Uterus (tissue), 4 donors: ENCODE measurements at regions of chr12 and their contacts with region 1.

Region 1: GRCh38 chr12:15209782-15210181 is 11.4 kb downstream of the RERG start:
- DNase-seq: peak in 1 of 2 donors; percentile 66
- H3K4me3 ChIP-seq: no peak overlapping the region
- H3K27ac ChIP-seq: peak overlapping the region; percentile 83 to 95
- H3K4me1 ChIP-seq: peaks cover 17 to 18% of the 10 kb centered on the region in 2 donors
- H3K27me3 ChIP-seq: no peaks in the 10 kb centered on the region
- CTCF ChIP-seq: no peak
- POLR2A ChIP-seq: no peak

Region 2: DNA sequence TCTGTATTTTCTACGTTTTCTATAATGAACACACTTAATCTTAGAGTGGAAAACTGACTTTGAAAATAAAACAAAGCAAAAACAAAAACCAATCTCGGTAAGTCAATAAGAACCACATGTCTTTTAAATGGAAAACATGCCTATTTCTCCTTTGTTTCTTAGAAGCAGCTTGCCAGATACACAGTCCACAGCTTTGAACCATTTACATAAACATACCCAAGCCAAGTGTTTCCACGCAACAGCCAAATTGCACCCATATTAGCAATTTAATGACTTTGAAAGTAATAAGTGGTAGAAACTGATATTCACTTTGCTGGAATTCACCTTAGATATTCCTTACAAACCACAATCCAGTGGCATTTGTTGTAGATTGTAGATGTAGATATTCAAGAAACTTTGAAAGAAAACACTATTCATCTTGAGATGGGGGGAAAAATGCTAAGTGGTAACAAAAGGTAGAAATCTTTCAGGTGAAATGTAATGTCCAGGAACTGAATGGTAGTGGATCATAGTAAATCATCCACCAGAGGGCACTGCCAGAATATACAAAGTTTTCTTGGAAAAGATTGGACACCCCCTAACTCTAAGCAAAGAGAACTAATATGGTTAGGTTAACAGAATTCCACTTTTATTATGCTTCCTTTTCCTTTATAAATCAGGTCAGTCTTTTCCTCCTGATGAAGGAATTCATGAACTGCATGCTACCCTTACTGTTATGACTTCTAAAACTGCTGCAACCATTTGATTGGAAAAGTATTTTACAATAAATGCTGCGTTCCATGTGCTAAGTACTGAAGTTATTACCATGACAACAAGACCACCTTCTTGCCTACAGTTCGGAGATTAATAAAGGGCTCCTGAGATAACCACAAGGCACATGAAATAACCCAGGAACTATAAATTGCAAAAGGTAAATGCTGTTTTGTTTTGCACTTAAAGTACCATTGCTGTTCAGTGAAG is 58.3 kb before region 1 on chr12:
- intact Hi-C with region 1: loop called (anchors 10 kb)
- DNase-seq: no peak
- H3K4me3 ChIP-seq: peak overlapping the region in 1 of 2 donors; percentile 0
- H3K27ac ChIP-seq: peak overlapping the region; percentile 92 to 95
- H3K4me1 ChIP-seq: peaks cover 17 to 33% of the 10 kb centered on the region in 2 donors
- H3K27me3 ChIP-seq: no peaks in the 10 kb centered on the region
- CTCF ChIP-seq: peak; percentile 47 to 74 (median 52)
- POLR2A ChIP-seq: no peak